HEK293 (cell line): ENCODE measurements at regions of chr1 and their contacts with region 1.

Region 1: DNA sequence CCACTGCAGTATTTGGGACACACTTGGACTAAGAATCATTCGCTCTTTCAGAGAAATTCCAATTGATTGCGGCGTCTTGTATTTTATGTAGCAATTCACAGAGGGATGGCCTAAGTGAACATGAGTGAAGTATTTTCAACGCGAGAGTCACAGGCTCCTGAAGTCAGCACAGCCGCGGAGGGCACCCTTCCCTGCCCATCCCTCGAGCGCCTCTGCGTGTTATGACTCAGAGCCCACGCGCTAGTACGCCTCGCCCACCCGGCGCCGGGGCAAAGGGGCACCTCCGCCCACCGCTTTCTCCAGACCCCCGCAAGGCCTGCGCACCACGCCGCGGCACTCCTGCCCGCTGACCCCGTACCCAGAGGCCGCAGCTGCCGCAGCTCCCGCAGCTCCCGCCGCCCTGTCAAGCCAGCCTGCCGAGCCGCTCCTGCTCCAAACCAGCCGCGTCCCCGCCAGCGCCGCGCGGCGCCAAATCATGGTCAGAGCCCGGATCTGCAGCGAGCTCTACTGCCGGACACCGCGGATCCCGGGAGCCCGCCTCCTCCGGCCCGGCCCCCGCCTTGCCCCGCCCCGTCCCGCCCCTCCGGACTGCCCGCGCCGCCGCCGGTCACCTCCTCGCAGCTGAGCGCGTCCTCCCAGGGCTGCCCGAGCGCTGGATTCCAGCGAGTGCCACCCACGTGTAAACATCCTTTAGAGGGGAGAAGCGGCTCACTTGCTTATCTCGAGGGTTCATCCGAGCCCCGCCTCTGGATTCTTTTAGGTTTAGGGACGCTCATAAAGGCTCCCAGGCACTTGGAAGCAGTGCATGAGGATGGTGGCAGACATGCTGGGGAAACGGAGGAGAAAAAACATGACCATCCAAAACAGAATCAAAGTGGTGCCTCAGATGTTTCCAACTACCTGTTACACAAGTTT is at the start of gene GLRX2:
- H3K4me3 ChIP-seq: peak within 1 kb of the TSS; percentile 77
- H3K27ac ChIP-seq: peak within 1 kb of the TSS; percentile 73
- H3K4me1 ChIP-seq: no peaks in the 10 kb centered on the region
- CTCF ChIP-seq: peak; percentile 41; the same call in 1 of the 2 replicates

Region 2: GRCh38 chr1:193087893-193088292 is 17.3 kb before region 1 on chr1:
- CTCF ChIA-PET with region 1: interaction called, 3 read pairs
- POLR2A ChIA-PET with region 1: interaction called, 10 read pairs
- H3K4me3 ChIP-seq: no peak overlapping the region
- H3K27ac ChIP-seq: no peak overlapping the region
- H3K4me1 ChIP-seq: no peaks in the 10 kb centered on the region
- CTCF ChIP-seq: no peak

Region 3: GRCh38 chr1:193121616-193122593 is 16.7 kb after region 1 on chr1 and contains the start of gene CDC73:
- CTCF ChIA-PET with region 1: interaction called, 5 read pairs
- POLR2A ChIA-PET with region 1: interaction called, 20 read pairs
- H3K4me3 ChIP-seq: peak within 1 kb of the TSS; percentile 60
- H3K27ac ChIP-seq: peak within 1 kb of the TSS; percentile 92
- H3K4me1 ChIP-seq: no peaks in the 10 kb centered on the region
- CTCF ChIP-seq: peak; percentile 100